GM10248 (cell line): ENCODE measurements at regions of chr6 and their contacts with region 1.

Region 1: DNA sequence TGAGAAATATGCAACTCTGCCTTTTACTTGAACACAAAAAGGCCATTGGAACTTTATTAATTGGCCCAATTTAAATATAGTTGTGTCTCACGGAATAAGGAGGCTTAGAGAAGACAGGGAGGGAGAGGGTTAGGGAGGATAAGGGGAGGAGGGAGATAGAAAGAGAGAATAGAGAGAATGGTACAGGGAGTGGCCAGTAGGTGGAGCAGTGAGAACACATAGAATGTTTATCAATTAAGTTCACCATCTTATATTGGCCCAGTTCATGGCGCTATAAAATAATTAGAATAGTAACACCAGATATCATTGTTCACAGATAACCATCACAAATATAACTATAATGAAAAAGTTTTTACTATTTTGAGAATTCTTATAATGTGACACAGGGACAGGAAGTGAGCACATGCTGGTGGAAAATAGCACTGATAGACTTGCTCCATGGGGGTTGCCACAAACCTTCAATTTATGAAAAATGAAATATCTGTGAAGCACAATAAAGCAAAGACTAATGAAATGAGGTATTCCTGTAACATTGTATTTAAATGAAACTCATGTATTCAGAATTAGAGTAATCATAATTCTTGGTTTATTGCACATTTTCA is 374.1 kb upstream of the MANEA start:
- DNase-seq: peak; percentile 11
- CTCF ChIP-seq: peak; percentile 48

Region 2: DNA sequence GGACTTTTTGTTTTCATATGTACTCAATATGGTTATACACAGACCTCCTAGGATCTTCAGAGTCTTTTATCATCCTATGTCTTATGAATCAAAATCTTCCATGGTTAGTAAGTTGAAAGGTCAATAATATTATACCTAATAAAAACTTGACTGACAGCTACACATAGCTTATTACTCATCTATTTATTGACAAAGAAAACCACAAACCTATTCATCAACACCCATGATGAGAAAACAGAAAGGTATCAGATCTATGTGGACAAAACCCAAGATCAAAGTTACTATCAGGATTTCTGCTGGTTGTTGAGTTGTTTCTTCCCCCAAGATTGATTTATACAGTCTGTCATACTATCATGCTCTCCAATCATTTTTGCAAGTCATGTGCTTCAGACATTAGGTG is 86.0 kb before region 1 on chr6:
- CTCF ChIA-PET with region 1: no interaction called
- POLR2A ChIA-PET with region 1: no interaction called
- DNase-seq: no peak
- CTCF ChIP-seq: no peak

Region 3: DNA sequence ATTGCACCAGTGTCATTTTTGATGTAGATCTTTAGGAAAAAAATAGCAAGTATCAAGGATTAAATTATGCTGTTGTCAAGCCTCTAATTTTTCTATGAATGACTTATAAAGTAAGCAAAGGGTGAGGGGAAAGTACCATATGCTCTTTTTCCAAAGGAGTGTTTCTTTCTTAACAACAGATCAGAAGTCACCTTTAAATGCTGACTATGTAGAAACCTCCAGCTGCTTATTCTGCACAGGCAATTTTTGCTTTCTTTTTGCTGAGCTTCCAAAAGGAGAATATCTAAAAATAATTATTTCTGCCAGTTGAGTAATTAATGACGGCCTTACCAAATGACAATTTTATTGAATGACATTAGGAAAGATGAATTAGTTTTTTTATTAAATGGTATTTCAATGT is 16.5 kb before region 1 on chr6:
- CTCF ChIA-PET with region 1: interaction called, 11 read pairs
- POLR2A ChIA-PET with region 1: no interaction called
- DNase-seq: no peak
- CTCF ChIP-seq: no peak

Region 4: DNA sequence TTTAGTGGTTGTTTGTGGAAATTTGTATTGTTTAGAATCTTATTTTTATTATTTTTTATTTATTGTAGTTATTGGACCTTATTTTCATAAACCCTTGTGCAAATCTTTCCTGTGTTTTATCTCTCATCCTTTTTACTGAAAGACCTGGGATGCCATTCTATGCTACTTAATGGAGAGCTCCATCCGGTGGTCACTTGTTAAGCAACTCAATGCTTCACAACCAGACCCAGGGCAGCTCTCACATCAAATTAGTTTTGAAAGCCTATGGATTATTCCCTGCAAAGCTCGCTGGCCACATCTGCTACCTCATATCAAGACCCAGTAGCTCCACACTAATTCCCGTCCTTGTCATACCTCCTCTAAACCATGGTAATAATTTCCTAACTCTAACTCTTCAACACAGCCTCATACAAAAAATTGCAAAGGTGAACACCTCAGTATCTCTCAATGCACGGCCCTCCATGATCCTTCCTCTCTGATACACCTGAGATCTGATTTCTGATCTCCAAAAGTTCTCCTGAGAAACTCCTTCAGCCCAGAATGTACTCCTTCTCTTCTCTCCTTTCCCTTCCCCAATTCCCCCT is 77.5 kb after region 1 on chr6:
- CTCF ChIA-PET with region 1: interaction called, 15 read pairs
- POLR2A ChIA-PET with region 1: no interaction called
- DNase-seq: no peak
- CTCF ChIP-seq: peak; percentile 60